Ascending aorta (tissue), 2 donors: ENCODE measurements at regions of chr1 and their contacts with region 1.

Region 1: GRCh38 chr1:168225476-168226190 is at the start of gene SFT2D2:
- DNase-seq: peak; percentile 21 to 90
- H3K4me3 ChIP-seq: peak within 1 kb of the TSS; percentile 85 to 93
- H3K27ac ChIP-seq: peak within 1 kb of the TSS; percentile 92 to 98
- H3K4me1 ChIP-seq: peaks cover 3 to 20% of the 10 kb centered on the region in 2 donors
- H3K27me3 ChIP-seq: no peaks in the 10 kb centered on the region
- CTCF ChIP-seq: no peak
- total RNA-seq, gene SFT2D2: 40.1 TPM

Region 2: DNA sequence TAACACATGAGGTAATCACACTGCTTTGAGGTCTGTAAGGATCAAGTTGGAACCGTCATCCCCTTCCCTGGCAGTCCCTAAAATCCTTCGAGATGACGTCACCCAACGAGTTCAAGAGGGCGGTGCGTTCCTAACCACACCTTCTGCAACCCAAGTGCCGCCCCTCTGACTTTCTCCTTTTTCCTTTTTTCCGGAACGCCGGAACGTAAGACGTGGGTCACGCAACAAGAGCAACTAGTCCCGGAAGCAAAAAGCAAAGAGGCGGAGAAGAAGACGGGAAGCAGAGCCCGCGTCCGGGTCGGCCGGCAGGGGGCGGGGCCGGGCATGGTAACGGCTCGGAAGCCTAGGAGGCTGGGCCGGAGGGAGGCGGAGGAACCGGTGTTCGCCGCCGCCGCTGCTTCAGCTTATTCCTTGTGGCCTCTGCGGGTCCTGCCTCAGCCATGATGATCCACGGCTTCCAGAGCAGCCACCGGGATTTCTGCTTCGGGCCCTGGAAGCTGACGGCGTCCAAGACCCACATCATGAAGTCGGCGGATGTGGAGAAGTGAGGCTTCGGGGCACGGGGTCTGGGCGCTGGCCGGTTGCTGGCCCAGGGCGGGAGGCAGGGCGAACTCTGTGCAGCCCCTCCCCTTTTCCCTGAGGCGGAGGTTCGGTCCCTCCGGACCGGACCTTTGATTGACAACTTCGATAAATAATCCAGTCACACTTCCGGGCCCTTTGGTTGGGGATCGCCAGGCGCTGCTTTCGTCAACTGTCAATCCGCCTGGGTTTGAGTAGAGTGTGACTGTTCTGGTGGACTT is 46.8 kb before region 1 on chr1 and contains the start of gene TIPRL:
- intact Hi-C with region 1: loop called (anchors 1 kb)
- DNase-seq: peak; percentile 89 to 99
- H3K4me3 ChIP-seq: peak within 1 kb of the TSS; percentile 66 to 89
- H3K27ac ChIP-seq: peak within 1 kb of the TSS; percentile 95 to 96
- H3K4me1 ChIP-seq: peaks cover 0 to 22% of the 10 kb centered on the region in 2 donors
- H3K27me3 ChIP-seq: no peaks in the 10 kb centered on the region
- CTCF ChIP-seq: peak; percentile 57 to 78 (median 62)
- total RNA-seq, gene TIPRL: 2.7 TPM

Region 3: GRCh38 chr1:168452329-168452728 is 226.7 kb after region 1 on chr1:
- intact Hi-C with region 1: no loop called
- DNase-seq: no peak
- H3K4me3 ChIP-seq: no peak overlapping the region
- H3K27ac ChIP-seq: no peak overlapping the region
- H3K4me1 ChIP-seq: no peaks in the 10 kb centered on the region
- H3K27me3 ChIP-seq: no peaks in the 10 kb centered on the region
- CTCF ChIP-seq: no peak

Region 4: GRCh38 chr1:169106095-169106920 is 880.7 kb after region 1 on chr1 and contains the start of gene ATP1B1:
- intact Hi-C with region 1: loop called (anchors 10 kb)
- DNase-seq: peak; percentile 54 to 92
- H3K4me3 ChIP-seq: peak within 1 kb of the TSS; percentile 60 to 96
- H3K27ac ChIP-seq: peak within 1 kb of the TSS; percentile 74 to 80
- H3K4me1 ChIP-seq: peaks cover 2 to 11% of the 10 kb centered on the region in 2 donors
- H3K27me3 ChIP-seq: no peaks in the 10 kb centered on the region
- CTCF ChIP-seq: peak; percentile 38 to 55 (median 54)
- total RNA-seq, gene ATP1B1: 3.5 TPM

Region 5: GRCh38 chr1:169367486-169368405 is 1142.1 kb after region 1 on chr1 and contains the starts of genes BLZF1 and NME7:
- intact Hi-C with region 1: loop called (anchors 5 kb)
- DNase-seq: peak; percentile 95 to 98
- H3K4me3 ChIP-seq: peak within 1 kb of the TSS; percentile 84 to 90
- H3K27ac ChIP-seq: peak within 1 kb of the TSS; percentile 64 to 80
- H3K4me1 ChIP-seq: peaks cover 0 to 6% of the 10 kb centered on the region in 2 donors
- H3K27me3 ChIP-seq: no peaks in the 10 kb centered on the region
- CTCF ChIP-seq: no peak
- total RNA-seq, gene BLZF1: 8.5 TPM
- total RNA-seq, gene NME7: 4.9 TPM